CD4-positive, alpha-beta memory T cell (primary cell): ENCODE measurements at regions of chr19 and their contacts with region 1.

Region 1: DNA sequence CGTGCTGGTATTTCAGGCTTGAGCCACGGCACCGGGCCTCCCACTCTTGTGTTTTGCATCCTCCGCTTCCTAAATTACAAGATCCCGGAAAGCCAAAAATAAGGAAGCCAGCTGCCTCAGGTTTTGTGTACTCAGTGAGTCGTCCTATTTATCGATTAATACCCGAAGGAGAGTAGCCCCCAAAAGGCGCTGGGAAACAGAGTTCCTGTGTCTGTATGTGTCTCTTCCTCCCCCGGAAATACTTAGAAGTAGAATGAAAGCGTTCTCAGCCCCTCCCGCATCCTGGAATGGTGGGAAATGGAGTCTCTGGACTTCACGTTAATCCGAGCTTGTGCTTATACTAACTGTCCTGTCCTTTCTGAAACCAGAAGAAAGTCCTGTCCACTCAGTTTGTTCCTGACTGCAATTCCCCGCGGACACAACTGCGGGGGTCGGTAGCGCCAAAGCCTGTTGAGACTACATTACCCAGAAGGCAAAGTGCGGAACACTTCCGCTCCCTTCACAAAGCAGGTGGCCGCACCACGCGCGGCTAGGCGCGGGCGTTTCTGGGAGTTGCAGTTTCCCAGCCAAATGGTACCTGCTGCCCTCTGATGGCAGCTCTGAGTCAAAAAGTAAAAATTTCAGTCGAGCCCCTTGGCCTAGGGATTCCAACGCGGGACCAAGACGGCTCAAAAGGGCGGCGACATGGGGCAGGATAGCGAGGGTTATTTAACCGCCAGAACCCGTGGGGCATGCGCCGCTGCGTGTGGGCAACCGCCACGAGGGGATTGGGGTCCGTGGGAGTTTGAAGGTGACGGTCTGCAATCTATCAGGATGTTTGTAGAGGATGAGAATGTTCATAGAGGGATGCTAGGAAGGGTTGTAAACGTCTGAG is 2.2 kb upstream of the GSK3A start:
- DNase-seq: peak; percentile 89 to 95 (median 91)
- H3K4me3 ChIP-seq: peak overlapping the region; percentile 53 to 89
- H3K4me3 Mint-ChIP-seq: peak overlapping the region; percentile 94 to 99 (median 97)
- H3K27ac ChIP-seq: peak overlapping the region; percentile 89
- H3K27ac Mint-ChIP-seq: peak overlapping the region; percentile 77 to 99 (median 99)
- H3K4me1 ChIP-seq: peaks cover 47% of the 10 kb centered on the region
- H3K4me1 Mint-ChIP-seq: peaks cover 26 to 62% (median 44%) of the 10 kb centered on the region in 4 donors
- H3K27me3 ChIP-seq: no peaks in the 10 kb centered on the region
- H3K27me3 Mint-ChIP-seq: no peaks in the 10 kb centered on the region

Region 2: DNA sequence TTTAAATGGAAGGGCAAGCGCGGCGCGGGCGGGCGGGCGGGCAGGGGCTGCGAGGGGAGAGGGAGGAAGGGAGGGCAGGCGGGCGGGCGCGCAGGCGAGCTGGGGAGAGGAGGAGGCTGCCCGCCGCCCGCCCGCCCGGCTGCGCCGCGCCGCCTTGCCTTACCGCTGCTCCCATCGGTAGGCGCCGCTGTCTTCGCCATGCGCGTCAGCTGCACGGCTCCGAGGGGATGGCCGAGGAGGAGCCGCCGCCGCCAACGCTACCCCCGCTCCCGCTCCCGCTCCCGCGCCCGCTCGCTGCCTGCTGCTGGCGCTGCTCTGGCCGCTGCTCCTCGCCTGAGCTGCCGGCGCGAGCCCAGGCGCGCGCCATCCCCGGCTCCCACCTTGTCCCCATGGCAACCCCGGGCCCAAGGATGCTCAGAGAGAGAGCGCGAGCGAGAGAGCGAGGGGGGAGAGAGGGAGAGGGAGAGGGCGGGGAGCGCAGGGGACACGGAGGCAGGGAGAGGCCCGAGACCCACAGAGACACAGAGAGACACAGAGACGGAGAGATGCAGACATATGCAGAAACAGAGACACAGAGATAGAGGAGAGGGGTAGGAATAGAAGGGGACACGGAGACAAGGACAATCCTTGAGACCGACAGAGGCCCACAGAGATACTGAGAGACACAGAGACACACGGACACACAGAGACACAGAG is 67.4 kb before region 1 on chr19:
- CTCF ChIA-PET with region 1: interaction called, 5 read pairs
- POLR2A ChIA-PET with region 1: interaction called, 19 read pairs
- intact Hi-C with region 1: loop called (anchors 2 kb)
- DNase-seq: peak; percentile 75 to 79 (median 78)
- H3K4me3 ChIP-seq: peak overlapping the region in 1 of 2 donors; percentile 59
- H3K4me3 Mint-ChIP-seq: no peak overlapping the region
- H3K27ac ChIP-seq: no peak overlapping the region
- H3K27ac Mint-ChIP-seq: no peak overlapping the region
- H3K4me1 ChIP-seq: peaks cover 29% of the 10 kb centered on the region
- H3K4me1 Mint-ChIP-seq: peaks cover 10 to 29% (median 18%) of the 10 kb centered on the region in 4 donors
- H3K27me3 ChIP-seq: peaks cover 17% of the 10 kb centered on the region
- H3K27me3 Mint-ChIP-seq: peaks cover 4 to 11% of the 10 kb centered on the region in 2 donors

Region 3: DNA sequence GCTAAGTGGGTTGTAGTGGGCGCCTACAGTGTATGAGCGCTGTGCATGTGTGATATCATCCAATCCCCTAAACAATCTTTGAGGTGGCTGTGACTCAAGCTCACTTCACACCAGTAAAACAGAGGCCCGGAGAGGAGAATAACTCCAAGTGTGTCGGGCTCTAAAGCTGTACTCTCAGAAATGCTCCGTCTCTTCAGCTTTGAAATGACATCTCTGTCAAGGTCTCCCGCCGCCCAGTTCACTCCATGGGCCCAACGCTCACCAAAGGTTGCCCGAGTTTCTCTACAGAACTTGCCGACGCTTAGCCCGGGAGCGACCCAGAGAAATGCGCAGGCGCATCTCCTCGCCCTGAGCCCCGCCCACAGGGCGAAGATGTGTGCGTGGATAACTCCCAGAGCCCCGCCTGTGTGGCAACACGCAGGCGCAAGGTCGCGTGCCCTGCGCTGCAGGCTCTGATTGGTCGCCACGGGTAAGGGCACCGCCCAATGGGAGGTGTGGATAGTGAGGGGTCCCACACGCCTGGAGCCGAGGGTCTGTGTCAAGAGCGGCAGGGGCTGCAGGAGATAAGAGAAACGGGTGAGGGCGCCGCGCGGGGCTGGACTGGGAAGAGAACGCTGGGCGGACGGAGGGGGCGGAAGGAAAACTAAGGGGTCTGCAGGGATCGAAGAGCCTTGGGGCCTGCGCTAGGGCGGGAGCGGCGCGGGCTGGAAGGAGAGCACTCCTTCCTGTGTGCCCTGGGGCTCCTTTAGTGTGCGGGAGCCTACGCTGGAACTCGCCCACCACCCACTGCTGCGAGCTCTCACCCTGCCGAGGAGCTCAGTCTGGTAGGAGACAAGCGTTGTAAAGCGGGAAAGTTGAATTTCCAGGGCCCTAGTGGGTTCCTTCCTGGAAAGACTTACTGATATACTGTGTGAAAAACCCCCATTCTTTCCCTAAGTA is 24.5 kb before region 1 on chr19 and contains the start of gene ZNF526:
- CTCF ChIA-PET with region 1: interaction called, 13 read pairs
- POLR2A ChIA-PET with region 1: interaction called, 101 read pairs
- intact Hi-C with region 1: loop called (anchors 1 kb)
- DNase-seq: peak; percentile 95 to 97 (median 97)
- H3K4me3 ChIP-seq: peak within 1 kb of the TSS; percentile 82 to 86
- H3K4me3 Mint-ChIP-seq: peak within 1 kb of the TSS; percentile 96 to 100 (median 98)
- H3K27ac ChIP-seq: peak within 1 kb of the TSS; percentile 77
- H3K27ac Mint-ChIP-seq: peak within 1 kb of the TSS; percentile 94 to 99 (median 98)
- H3K4me1 ChIP-seq: peaks cover 45% of the 10 kb centered on the region
- H3K4me1 Mint-ChIP-seq: peaks cover 39 to 69% (median 53%) of the 10 kb centered on the region in 4 donors
- H3K27me3 ChIP-seq: no peaks in the 10 kb centered on the region
- H3K27me3 Mint-ChIP-seq: no peaks in the 10 kb centered on the region
- total RNA-seq, gene ZNF526: 26.7 to 28.8 TPM

Region 4: GRCh38 chr19:42268704-42269477 is 24.3 kb after region 1 on chr19 and contains the start of gene CIC:
- CTCF ChIA-PET with region 1: interaction called, 6 read pairs
- POLR2A ChIA-PET with region 1: interaction called, 73 read pairs
- intact Hi-C with region 1: loop called (anchors 1 kb)
- DNase-seq: peak; percentile 100
- H3K4me3 ChIP-seq: peak within 1 kb of the TSS; percentile 83 to 96
- H3K4me3 Mint-ChIP-seq: peak within 1 kb of the TSS in 4 of 8 donors; percentile 89 to 94 (median 92)
- H3K27ac ChIP-seq: peak within 1 kb of the TSS; percentile 99
- H3K27ac Mint-ChIP-seq: peak within 1 kb of the TSS in 4 of 7 donors; percentile 96 to 99 (median 98)
- H3K4me1 ChIP-seq: peaks cover 33% of the 10 kb centered on the region
- H3K4me1 Mint-ChIP-seq: peaks cover 0 to 29% (median 26%) of the 10 kb centered on the region in 4 donors
- H3K27me3 ChIP-seq: no peaks in the 10 kb centered on the region
- H3K27me3 Mint-ChIP-seq: no peaks in the 10 kb centered on the region
- total RNA-seq, gene CIC: 81.6 to 82.6 TPM

Region 5: DNA sequence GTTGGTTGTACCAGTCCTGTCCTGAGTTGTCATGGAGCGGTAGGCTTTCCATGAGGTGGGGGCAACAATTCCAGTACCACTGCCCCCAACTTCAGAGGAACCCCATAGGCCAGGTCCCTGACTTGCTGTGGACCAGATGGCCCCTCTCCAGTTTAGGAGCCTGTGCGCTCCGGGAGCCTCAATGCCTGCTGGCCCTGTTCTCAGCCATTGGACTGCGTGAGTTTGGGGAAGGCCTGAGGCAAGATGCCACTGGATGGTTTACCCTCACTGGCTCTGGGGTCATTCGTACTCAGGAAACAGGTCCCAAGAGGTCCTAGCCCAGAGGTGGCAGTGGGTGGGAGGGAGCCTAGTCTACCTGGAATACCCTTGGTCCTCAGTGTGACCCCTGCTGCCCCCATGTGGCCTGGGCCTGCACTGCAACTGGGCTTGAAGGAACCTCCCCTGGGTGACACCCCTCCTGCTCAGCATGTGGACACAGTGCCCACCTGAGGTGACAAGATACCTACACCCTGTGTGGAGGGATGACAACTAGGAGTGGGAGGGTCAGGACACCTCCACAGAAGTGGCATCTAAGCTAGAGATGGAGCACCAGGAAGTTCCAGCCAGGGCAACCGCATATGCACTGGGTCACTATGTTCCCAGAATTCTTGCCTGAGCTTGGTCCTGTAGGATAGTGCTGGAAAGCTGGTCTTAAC is 51.4 kb after region 1 on chr19:
- CTCF ChIA-PET with region 1: interaction called, 22 read pairs
- POLR2A ChIA-PET with region 1: interaction called, 20 read pairs
- intact Hi-C with region 1: loop called (anchors 1 kb)
- DNase-seq: peak; percentile 78 to 89 (median 85)
- H3K4me3 ChIP-seq: no peak overlapping the region
- H3K4me3 Mint-ChIP-seq: peak overlapping the region in 1 of 8 donors; percentile 25
- H3K27ac ChIP-seq: peak overlapping the region; percentile 11
- H3K27ac Mint-ChIP-seq: peak overlapping the region in 6 of 7 donors; percentile 17 to 79 (median 73)
- H3K4me1 ChIP-seq: peaks cover 8% of the 10 kb centered on the region
- H3K4me1 Mint-ChIP-seq: peaks cover 3 to 22% (median 12%) of the 10 kb centered on the region in 4 donors
- H3K27me3 ChIP-seq: no peaks in the 10 kb centered on the region
- H3K27me3 Mint-ChIP-seq: no peaks in the 10 kb centered on the region

Region 6: GRCh38 chr19:42423462-42424344 is 179.1 kb after region 1 on chr19:
- CTCF ChIA-PET with region 1: no interaction called
- POLR2A ChIA-PET with region 1: no interaction called
- intact Hi-C with region 1: loop called (anchors 5 kb)
- DNase-seq: peak; percentile 93 to 95 (median 94)
- H3K4me3 ChIP-seq: peak overlapping the region; percentile 86 to 97
- H3K4me3 Mint-ChIP-seq: peak overlapping the region; percentile 91 to 99 (median 98)
- H3K27ac ChIP-seq: peak overlapping the region; percentile 61
- H3K27ac Mint-ChIP-seq: peak overlapping the region; percentile 88 to 98 (median 95)
- H3K4me1 ChIP-seq: peaks cover 39% of the 10 kb centered on the region
- H3K4me1 Mint-ChIP-seq: peaks cover 28 to 48% (median 37%) of the 10 kb centered on the region in 4 donors
- H3K27me3 ChIP-seq: no peaks in the 10 kb centered on the region
- H3K27me3 Mint-ChIP-seq: no peaks in the 10 kb centered on the region